ENCODE measurements at regions of chr17 and their contacts with region 1.

Region 1: DNA sequence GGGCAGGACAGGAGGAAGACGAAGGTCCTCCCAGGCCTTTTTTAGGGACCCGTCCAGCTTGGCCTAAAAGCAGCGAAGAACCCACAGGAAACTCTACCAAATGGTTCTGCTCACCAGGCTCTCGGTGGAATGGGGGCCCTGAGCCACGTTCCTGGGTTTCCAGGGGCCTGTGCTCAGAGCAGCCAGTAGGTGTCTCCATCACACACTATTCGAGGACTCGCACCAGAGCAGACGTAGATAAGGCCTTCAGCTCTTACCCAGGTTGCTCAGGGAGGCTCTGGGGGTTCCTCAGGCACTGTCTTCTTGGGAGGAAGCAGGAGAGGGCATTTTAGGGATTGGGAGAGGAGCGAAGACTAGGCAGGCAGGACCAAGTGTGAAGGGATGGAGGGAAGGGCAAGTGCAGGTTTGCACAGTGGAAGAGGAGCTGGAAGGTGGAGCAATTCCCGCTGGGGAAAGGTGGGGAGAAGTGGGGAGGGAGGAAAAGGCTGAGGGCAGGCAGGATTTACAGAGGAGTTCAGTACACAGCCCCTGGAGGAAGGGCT is 157.1 kb downstream of the RGS9 start:
- DNase-seq: peak in 1 of 2 donors; percentile 56
- ATAC-seq: peak; percentile 86
- H3K4me3 ChIP-seq: no peak overlapping the region
- H3K27ac ChIP-seq: no peak overlapping the region
- H3K4me1 ChIP-seq: no peaks in the 10 kb centered on the region
- H3K27me3 ChIP-seq: no peaks in the 10 kb centered on the region

Region 2: DNA sequence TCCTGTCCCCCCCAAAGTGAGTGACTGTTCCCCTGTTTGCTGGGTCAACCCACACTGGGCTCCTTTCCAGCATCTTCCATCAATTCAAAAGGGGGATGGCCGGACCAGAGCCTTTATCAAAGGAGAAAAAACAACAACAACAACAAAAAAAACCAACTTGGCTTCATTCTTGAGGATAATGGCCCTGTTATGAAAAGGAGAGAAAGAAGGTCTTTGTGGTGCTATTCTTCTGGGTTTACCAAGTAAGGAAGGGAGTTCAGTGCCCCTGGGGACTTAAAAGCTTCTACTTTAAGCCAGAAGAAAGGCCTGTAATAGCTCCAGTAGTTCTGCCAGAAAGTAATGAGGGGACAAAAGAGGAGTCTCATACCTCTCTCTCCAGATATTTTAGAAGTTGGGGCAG is 85.5 kb before region 1 on chr17:
- intact Hi-C with region 1: no loop called
- DNase-seq: no peak
- ATAC-seq: no peak
- H3K4me3 ChIP-seq: no peak overlapping the region
- H3K27ac ChIP-seq: no peak overlapping the region
- H3K4me1 ChIP-seq: no peaks in the 10 kb centered on the region
- H3K27me3 ChIP-seq: no peaks in the 10 kb centered on the region

Region 3: GRCh38 chr17:65231662-65232335 is 62.5 kb before region 1 on chr17:
- intact Hi-C with region 1: loop called in 1 of 2 experiments (anchors 5 kb)
- DNase-seq: no peak
- ATAC-seq: no peak
- H3K4me3 ChIP-seq: no peak overlapping the region
- H3K27ac ChIP-seq: no peak overlapping the region
- H3K4me1 ChIP-seq: no peaks in the 10 kb centered on the region
- H3K27me3 ChIP-seq: no peaks in the 10 kb centered on the region

Region 4: DNA sequence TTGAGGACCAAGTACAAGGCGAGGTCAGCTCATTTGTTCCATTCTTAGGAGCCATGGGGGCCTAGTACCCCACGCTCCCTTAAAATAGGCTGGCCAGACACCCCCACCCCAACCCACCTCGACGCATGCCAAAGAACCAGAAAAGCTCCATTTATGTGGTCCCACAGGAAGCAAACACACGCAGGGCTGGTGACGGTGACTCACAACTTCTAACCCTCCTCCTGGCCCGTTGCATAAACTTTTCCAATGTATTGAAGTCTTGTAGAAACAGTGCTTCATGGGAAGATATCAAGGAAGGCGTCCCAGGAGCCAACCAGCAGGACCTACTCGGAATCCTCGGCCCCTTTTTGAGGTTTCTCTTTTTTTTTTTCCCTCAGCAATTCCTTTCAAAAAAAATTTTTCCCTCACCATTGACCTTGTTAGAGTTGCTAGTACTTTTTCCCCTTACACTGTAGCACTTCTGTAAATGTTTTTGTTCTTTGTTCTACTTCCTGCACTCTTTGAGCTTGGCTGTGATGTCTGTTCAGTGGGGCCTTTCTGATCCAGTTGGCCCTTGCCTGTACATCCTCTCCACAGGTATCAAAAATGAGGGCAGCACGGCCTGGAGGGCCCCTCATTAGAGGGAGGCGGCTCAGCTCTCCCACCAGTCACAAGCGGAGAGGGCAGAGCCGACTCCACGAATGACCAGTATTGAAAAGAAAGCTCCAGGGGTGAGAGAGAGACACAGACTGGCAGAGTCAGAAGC is 51.2 kb after region 1 on chr17:
- intact Hi-C with region 1: no loop called
- DNase-seq: no peak
- ATAC-seq: no peak
- H3K4me3 ChIP-seq: no peak overlapping the region
- H3K27ac ChIP-seq: no peak overlapping the region
- H3K4me1 ChIP-seq: no peaks in the 10 kb centered on the region
- H3K27me3 ChIP-seq: no peaks in the 10 kb centered on the region

Region 5: DNA sequence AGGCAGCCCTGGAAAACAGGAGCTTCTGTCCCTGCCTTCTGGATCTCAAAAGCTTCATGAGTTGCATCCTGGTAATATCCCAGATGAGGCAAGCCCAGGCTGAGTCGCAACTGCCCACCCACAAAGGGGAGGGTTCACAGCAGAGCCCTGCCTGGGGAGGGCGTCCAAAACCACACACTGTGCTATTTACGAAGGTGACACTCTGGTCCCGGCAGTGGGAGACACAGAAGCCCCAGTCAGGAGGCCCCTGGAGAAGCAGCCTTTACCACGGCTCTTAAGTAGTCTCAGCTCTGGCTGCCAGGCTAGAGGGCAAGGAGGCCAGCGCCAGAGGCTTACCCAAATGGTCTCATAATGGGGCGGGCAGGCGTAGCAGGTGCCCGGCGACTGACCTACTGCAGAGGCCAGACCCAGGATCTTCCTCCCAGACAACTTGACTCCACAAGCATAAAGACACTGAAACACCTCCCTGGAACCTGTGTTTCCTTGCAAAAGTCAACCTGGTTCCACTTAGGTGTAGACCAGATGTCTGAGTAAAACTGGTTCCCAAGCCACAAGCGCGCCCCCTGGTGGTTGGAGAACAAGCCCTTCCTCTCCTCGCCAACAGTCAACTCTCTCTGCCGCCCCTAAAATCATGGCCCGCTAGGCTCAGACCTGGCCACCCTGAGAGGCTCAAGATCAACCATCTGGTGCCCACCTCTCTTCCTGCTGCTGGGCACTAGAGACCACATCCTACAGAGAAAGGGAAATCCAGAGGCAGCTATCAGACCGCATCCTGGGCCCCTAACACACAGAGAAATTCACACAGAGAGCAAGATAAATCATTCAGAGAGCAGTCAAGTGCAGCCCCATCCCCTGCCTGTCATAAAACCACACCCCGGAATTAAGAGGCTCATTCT is 262.0 kb after region 1 on chr17:
- intact Hi-C with region 1: loop called (anchors 2 to 5 kb)
- DNase-seq: peak; percentile 80 to 95
- ATAC-seq: no peak
- H3K4me3 ChIP-seq: peak overlapping the region in 1 of 2 donors; percentile 14
- H3K27ac ChIP-seq: no peak overlapping the region
- H3K4me1 ChIP-seq: peaks cover 2 to 3% of the 10 kb centered on the region in 2 donors
- H3K27me3 ChIP-seq: no peaks in the 10 kb centered on the region

Region 6: GRCh38 chr17:65561394-65562205 is 267.4 kb after region 1 on chr17 and contains the start of gene AXIN2:
- intact Hi-C with region 1: loop called (anchors 2 to 5 kb)
- DNase-seq: peak; percentile 94 to 95
- ATAC-seq: peak; percentile 88
- H3K4me3 ChIP-seq: peak within 1 kb of the TSS; percentile 42 to 99
- H3K27ac ChIP-seq: peak within 1 kb of the TSS; percentile 78 to 98
- H3K4me1 ChIP-seq: no peaks in the 10 kb centered on the region
- H3K27me3 ChIP-seq: no peaks in the 10 kb centered on the region
- total RNA-seq, gene AXIN2: 12.8 to 13.8 TPM

Region 7: GRCh38 chr17:66165513-66166123 is 871.4 kb after region 1 on chr17:
- intact Hi-C with region 1: loop called (anchors 5 to 10 kb)
- DNase-seq: no peak
- ATAC-seq: no peak
- H3K4me3 ChIP-seq: no peak overlapping the region
- H3K27ac ChIP-seq: no peak overlapping the region
- H3K4me1 ChIP-seq: no peaks in the 10 kb centered on the region
- H3K27me3 ChIP-seq: no peaks in the 10 kb centered on the region

Measured in aorta (tissue), 5 donors.